Motor neuron (in vitro differentiated cells): ENCODE measurements at regions of chr13 and their contacts with region 1.

Region 1: DNA sequence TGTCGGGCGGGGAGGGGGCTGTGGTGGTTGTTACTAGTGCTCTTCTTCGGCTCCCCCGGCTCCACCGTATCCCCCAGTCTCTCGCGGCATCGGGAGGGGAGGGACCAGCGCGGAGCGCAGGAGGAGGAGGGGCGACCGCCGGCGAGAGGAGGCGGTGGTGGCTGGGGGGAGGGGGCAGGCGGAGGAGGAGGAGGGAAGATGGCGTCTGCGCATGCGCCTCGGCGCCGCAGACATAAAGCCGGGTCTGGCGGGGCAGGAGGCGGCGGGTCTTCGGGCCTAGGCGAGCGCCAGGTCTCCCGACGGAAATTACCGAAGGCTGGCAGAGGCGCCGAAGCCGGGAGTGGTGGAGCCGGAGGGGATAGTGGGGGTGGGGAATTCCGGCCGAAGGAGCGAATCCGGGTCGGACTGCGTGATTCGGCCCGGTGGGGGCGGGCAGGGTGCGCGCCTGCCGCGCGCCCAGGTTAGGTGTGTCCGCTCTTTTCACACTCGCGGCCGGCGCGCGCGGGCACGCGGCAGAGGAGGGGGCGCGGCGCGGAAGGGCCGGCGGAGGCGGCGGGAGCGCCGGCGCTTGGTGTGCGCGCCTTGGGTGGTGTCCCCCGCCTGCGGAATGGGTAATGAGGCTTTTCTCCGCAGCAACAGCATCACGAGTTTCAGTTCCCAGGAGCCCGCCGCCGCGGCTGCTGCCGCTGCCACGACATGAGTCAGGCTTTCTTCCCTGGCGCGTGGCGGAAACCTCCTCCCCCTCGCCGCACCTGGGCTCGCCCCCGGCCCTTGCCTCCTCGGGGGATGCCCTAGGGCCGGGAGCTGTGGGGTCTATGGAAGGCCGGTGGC is 1.3 kb upstream of the TSC22D1 start:
- ATAC-seq: peak; percentile 70 to 86 (median 82)
- H3K4me3 ChIP-seq: peak overlapping the region; percentile 64 to 92 (median 74)
- H3K27ac ChIP-seq: peak overlapping the region; percentile 90 to 93
- H3K4me1 ChIP-seq: peaks cover 6 to 13% of the 10 kb centered on the region in 2 donors

Region 2: DNA sequence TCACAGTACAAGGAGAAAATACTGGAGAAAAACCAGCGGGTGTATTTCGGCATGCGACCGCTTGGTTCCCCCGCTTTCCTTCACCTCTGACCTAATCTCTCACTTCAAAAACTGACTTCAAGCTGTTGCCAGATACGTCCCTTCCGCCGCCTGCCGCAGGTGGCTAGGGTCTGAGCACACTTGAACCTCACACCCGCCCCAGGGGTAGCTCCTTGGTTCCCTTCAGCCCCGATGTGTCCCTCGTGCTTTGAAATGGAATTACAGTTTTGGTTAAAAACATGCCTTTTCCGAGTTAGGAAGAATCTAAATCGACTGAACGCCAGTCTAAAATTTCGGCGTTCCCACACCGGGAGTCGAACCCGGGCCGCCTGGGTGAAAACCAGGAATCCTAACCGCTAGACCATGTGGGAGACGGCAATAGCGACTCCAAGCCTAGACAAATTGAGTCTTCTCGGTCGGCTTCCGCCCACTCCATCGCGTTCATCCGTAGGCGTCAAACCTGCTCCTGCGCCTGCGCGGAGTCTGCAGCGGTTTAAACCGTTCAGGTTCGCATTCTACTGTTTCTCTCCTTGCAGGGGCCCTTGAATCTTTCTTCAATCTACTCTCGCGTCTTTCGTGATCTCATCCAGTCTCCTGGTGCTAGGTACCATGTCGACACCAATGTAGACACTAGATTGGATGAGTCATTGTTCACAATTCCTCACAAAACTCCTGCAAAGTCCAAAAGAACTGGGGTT is 340.3 kb after region 1 on chr13:
- in situ Hi-C with region 1: loop called in 1 of 9 experiments (anchors 25 kb)
- ATAC-seq: peak; percentile 62 to 86 (median 81)
- H3K4me3 ChIP-seq: peak overlapping the region; percentile 47 to 63 (median 54)
- H3K27ac ChIP-seq: peak overlapping the region; percentile 87 to 93
- H3K4me1 ChIP-seq: peaks cover 2 to 9% of the 10 kb centered on the region in 2 donors